IMR-90 (cell line): ENCODE measurements at regions of chr5 and their contacts with region 1.

Region 1: GRCh38 chr5:158718738-158719505 is 380.8 kb downstream of the EBF1 start:
- DNase-seq: peak; percentile 21
- ATAC-seq: peak; percentile 24; the same call in 1 of the 2 replicates
- H3K4me3 ChIP-seq: no peak overlapping the region
- H3K27ac ChIP-seq: no peak overlapping the region
- H3K4me1 ChIP-seq: no peaks in the 10 kb centered on the region
- H3K27me3 ChIP-seq: no peaks in the 10 kb centered on the region
- CTCF ChIP-seq: no peak
- POLR2A ChIP-seq: no peak
- RAD21 ChIP-seq: no peak

Region 2: DNA sequence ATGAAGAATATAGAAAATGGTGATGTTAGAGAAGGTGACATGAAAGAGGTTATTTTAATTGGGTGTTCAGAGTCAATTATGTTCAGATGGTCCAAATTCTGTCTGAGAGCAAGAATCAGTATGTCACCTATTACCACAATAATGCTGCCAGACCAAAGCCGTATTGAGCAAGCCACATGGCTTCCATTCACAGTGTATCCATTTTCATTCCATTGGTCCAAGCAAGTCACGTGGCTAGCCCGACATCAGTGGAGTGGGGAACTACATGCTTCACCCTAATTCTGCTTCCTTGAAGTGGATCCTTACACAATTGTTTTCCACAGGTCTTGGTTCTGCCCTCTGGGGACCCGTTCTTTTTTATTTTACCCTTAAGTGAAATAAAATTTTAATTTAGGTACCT is 32.7 kb before region 1 on chr5:
- CTCF ChIA-PET with region 1: no interaction called
- POLR2A ChIA-PET with region 1: no interaction called
- dilution Hi-C with region 1: no loop called
- in situ Hi-C with region 1: no loop called
- intact Hi-C with region 1: loop called (anchors 1 kb)
- DNase-seq: no peak
- ATAC-seq: no peak
- H3K4me3 ChIP-seq: no peak overlapping the region
- H3K27ac ChIP-seq: no peak overlapping the region
- H3K4me1 ChIP-seq: no peaks in the 10 kb centered on the region
- H3K27me3 ChIP-seq: no peaks in the 10 kb centered on the region
- CTCF ChIP-seq: no peak
- POLR2A ChIP-seq: no peak
- RAD21 ChIP-seq: no peak